Sigmoid colon (tissue), 7 donors: ENCODE measurements at regions of chr4 and their contacts with region 1.

Region 1: DNA sequence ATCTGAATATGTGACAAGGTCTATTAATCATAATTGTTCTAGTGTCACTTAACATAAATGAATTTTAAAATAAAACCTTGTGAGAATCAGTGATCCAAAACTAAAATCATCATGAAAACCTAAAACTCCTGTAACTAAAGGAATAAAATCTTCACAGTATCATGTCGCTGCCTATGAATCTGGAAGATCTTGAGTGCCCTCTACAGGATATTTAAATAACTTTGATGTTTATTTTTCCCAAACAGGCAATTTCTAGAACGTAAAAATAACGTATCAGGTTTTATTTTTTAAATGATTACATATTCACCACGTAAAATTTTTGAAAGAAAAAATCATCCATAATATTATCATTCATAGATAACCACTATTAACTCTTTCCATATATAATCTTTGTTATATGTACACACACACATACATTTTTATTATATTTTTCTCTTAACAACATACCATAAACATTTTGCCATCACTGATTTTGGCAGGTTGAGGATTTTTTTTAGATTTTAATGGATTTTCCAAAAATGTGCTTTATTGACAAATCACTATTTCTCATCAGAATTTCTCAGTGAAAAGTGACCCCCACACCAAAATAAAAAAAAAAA is 79.6 kb downstream of the COMMD8 start:
- DNase-seq: no peak
- H3K4me3 ChIP-seq: no peak overlapping the region
- H3K27ac ChIP-seq: no peak overlapping the region
- H3K4me1 ChIP-seq: no peaks in the 10 kb centered on the region
- H3K27me3 ChIP-seq: no peaks in the 10 kb centered on the region
- CTCF ChIP-seq: peak in 2 of 4 experiments; percentile 19 to 31
- EP300 ChIP-seq: no peak
- POLR2A ChIP-seq: no peak

Region 2: GRCh38 chr4:46844325-46844917 is 539.5 kb before region 1 on chr4:
- intact Hi-C with region 1: loop called (anchors 10 kb)
- DNase-seq: no peak
- H3K4me3 ChIP-seq: no peak overlapping the region
- H3K27ac ChIP-seq: no peak overlapping the region
- H3K4me1 ChIP-seq: no peaks in the 10 kb centered on the region
- H3K27me3 ChIP-seq: no peaks in the 10 kb centered on the region
- CTCF ChIP-seq: peak in 2 of 4 experiments; percentile 22 to 46
- EP300 ChIP-seq: no peak
- POLR2A ChIP-seq: no peak